Pancreas (tissue), 10 donors: ENCODE measurements at regions of chr9 and their contacts with region 1.

Region 1: GRCh38 chr9:34591248-34591916 is 1.9 kb upstream of the CNTFR start:
- DNase-seq: peak; percentile 70 to 98 (median 86)
- ATAC-seq: peak; percentile 90 to 97 (median 94)
- H3K4me3 ChIP-seq: peak overlapping the region in 3 of 4 donors; percentile 5 to 33 (median 18)
- H3K27ac ChIP-seq: no peak overlapping the region
- H3K4me1 ChIP-seq: peaks cover 0 to 3% (median 0%) of the 10 kb centered on the region in 3 donors
- H3K27me3 ChIP-seq: peaks cover 0 to 18% (median 4%) of the 10 kb centered on the region in 4 donors
- CTCF ChIP-seq: peak; percentile 78 to 92 (median 88)

Region 2: GRCh38 chr9:34403554-34404380 is 187.6 kb before region 1 on chr9:
- intact Hi-C with region 1: loop called in 1 of 3 experiments (anchors 10 kb)
- DNase-seq: peak; percentile 43 to 86 (median 69)
- ATAC-seq: peak; percentile 62 to 91 (median 85)
- H3K4me3 ChIP-seq: no peak overlapping the region
- H3K27ac ChIP-seq: no peak overlapping the region
- H3K4me1 ChIP-seq: no peaks in the 10 kb centered on the region
- H3K27me3 ChIP-seq: no peaks in the 10 kb centered on the region
- CTCF ChIP-seq: peak; percentile 87 to 98 (median 96)

Region 3: DNA sequence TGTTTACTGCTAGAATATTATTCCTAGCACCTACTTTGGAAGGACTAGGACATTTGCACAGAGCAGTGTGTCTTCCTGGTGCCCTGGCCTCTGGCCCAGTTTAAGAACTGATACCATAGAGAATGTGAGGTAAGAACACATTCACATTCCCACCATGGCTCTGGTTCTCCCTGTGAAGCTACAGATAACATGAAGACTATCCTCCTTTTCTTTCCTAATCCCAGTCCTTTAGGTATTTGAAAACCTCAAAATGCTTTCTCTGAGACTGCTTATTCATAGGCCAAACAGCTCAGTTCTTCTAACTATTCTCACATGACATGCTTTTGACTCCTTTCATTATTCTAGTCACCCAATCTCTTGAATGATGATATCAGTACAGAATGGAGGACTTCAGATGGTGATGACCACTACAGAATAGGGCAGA is 144.9 kb before region 1 on chr9:
- intact Hi-C with region 1: loop called in 1 of 3 experiments (anchors 10 kb)
- DNase-seq: no peak
- ATAC-seq: no peak
- H3K4me3 ChIP-seq: no peak overlapping the region
- H3K27ac ChIP-seq: no peak overlapping the region
- H3K4me1 ChIP-seq: no peaks in the 10 kb centered on the region
- H3K27me3 ChIP-seq: no peaks in the 10 kb centered on the region
- CTCF ChIP-seq: no peak

Region 4: GRCh38 chr9:34546834-34547827 is 44.3 kb before region 1 on chr9:
- intact Hi-C with region 1: loop called in 2 of 3 experiments (anchors 5 to 10 kb)
- DNase-seq: peak in 4 of 6 donors; percentile 30 to 74 (median 37)
- ATAC-seq: peak; percentile 41 to 71 (median 64)
- H3K4me3 ChIP-seq: no peak overlapping the region
- H3K27ac ChIP-seq: no peak overlapping the region
- H3K4me1 ChIP-seq: no peaks in the 10 kb centered on the region
- H3K27me3 ChIP-seq: no peaks in the 10 kb centered on the region
- CTCF ChIP-seq: peak in 3 of 4 donors; percentile 32 to 47 (median 46)

Region 5: DNA sequence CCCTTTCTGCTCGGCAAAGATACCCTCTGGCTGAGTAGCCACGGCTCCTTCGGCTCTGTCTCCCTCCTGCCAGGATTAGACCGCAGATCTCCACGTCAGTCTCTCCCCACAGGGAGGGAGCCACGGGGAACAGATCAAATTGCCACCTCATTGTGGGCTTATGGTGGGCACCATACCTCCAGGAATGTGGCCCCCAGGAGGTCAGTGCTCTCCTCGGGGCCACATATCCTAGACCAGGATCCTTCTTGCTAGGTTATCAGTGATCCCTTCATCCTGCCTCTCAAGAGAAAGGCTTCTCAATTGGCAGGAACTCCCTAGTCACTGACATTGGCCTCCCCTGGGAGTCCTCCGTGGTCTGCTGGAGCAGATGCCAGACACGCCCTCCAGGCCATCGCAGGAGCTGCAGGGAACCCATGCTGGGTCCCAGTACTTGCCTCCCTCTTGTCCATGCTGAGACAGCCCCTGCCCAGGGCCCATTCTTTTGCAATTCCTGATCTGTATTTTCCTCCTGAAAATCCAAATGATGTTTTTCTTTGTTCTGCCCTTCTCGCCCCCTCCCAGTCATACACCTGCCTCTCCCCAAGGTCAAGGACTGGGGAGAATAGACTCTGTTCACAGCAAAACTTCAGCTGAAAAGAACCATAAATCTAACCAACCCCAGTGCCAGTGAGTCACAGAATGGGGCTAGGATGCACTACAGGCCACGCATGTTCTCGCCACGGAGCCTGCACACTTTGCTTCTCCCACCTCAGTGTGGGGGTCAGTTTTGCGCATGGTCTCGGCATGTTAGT is 37.0 kb before region 1 on chr9:
- intact Hi-C with region 1: loop called in 2 of 3 experiments (anchors 5 to 10 kb)
- DNase-seq: peak in 2 of 6 donors; percentile 20 to 35
- ATAC-seq: no peak
- H3K4me3 ChIP-seq: no peak overlapping the region
- H3K27ac ChIP-seq: no peak overlapping the region
- H3K4me1 ChIP-seq: no peaks in the 10 kb centered on the region
- H3K27me3 ChIP-seq: no peaks in the 10 kb centered on the region
- CTCF ChIP-seq: no peak

Region 6: GRCh38 chr9:34929506-34930102 is 338.2 kb after region 1 on chr9:
- intact Hi-C with region 1: no loop called
- DNase-seq: peak in 3 of 6 donors; percentile 28 to 62 (median 58)
- ATAC-seq: peak in 3 of 4 donors; percentile 47 to 83 (median 72)
- H3K4me3 ChIP-seq: no peak overlapping the region
- H3K27ac ChIP-seq: no peak overlapping the region
- H3K4me1 ChIP-seq: no peaks in the 10 kb centered on the region
- H3K27me3 ChIP-seq: no peaks in the 10 kb centered on the region
- CTCF ChIP-seq: peak in 3 of 4 donors; percentile 21 to 38 (median 33)